ENCODE measurements at regions of chr14 and their contacts with region 1.

Region 1: GRCh38 chr14:104770851-104771272 is 17.9 kb downstream of the SIVA1 start:
- DNase-seq: no peak
- ATAC-seq: no peak
- H3K4me3 ChIP-seq: no peak overlapping the region
- H3K27ac ChIP-seq: no peak overlapping the region
- H3K4me1 ChIP-seq: peaks cover 38% of the 10 kb centered on the region
- H3K27me3 ChIP-seq: no peaks in the 10 kb centered on the region
- CTCF ChIP-seq: peak in 6 of 7 experiments; percentile 7 to 56 (median 26)
- POLR2A ChIP-seq: no peak

Region 2: DNA sequence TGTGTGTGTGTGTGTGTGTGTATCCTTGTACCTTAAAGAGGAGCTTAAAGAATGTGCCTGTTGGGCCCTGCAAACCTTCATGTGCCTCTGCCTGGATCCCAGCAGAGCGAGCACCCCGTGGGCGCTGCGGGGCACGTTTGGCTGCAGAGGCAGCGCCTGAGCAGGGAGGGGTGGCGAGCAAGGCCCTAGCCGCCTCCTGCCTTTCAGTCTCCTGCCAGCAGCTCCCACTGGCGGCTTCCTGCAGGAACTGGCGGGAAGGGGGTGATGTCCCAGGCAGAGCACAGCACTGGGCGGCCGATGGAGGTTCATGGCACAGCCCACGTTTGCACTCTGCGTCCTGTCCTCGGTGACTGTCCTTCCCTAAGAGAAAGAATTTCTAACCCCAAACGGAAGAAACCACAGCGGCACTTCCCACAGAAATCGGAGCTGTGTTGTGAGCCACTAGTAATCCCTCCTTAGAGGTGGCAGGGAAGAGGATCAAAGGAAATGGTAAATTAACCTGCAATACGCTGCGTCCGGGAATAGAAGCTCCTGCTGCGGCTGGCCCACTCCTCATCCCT is 49.9 kb after region 1 on chr14:
- intact Hi-C with region 1: loop called (anchors 5 kb)
- DNase-seq: peak; percentile 41 to 74 (median 71)
- ATAC-seq: peak; percentile 22
- H3K4me3 ChIP-seq: no peak overlapping the region
- H3K27ac ChIP-seq: no peak overlapping the region
- H3K4me1 ChIP-seq: peaks cover 16% of the 10 kb centered on the region
- H3K27me3 ChIP-seq: no peaks in the 10 kb centered on the region
- CTCF ChIP-seq: peak in 6 of 7 experiments; percentile 10 to 71 (median 52)
- POLR2A ChIP-seq: no peak